ENCODE measurements at regions of chr5 and their contacts with region 1.

Region 1: DNA sequence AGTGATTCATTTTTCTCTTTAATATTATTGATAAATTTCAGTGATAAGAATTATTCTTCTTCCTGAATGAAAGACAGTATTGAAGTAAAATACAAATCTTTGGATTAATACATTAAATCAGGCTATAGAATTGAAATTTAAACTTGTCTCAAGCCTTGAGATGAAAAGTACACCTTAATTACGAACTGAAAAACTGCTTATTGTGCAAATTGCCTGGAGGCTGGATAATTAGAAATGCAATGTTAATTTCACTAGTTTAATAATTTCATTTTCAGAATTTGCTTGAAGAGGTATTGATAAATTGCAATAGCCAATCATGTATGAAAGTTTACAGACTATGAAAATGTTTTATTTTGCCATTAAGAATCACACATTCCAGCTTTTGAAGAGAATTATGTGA is 11.0 kb upstream of the CCNH start:
- DNase-seq: no peak
- ATAC-seq: no peak
- H3K4me3 ChIP-seq: no peak overlapping the region
- H3K27ac ChIP-seq: no peak overlapping the region
- H3K4me1 ChIP-seq: no peaks in the 10 kb centered on the region
- H3K27me3 ChIP-seq: no peaks in the 10 kb centered on the region
- CTCF ChIP-seq: no peak
- EP300 ChIP-seq: no peak
- POLR2A ChIP-seq: no peak
- RAD21 ChIP-seq: no peak

Region 2: GRCh38 chr5:88690409-88691229 is 1266.9 kb after region 1 on chr5:
- CTCF ChIA-PET with region 1: interaction called, 3 read pairs
- POLR2A ChIA-PET with region 1: no interaction called
- in situ Hi-C with region 1: loop called (anchors 25 kb)
- intact Hi-C with region 1: loop called (anchors 2 kb)
- DNase-seq: peak; percentile 7
- ATAC-seq: peak; percentile 91
- H3K4me3 ChIP-seq: no peak overlapping the region
- H3K27ac ChIP-seq: no peak overlapping the region
- H3K4me1 ChIP-seq: no peaks in the 10 kb centered on the region
- H3K27me3 ChIP-seq: peaks cover 7 to 85% of the 10 kb centered on the region in 2 experiments; a peak in 4 of 5 replicates
- CTCF ChIP-seq: peak; percentile 93
- EP300 ChIP-seq: no peak
- POLR2A ChIP-seq: no peak
- RAD21 ChIP-seq: peak; percentile 79